Activated CD4-positive, alpha-beta memory T cell treated with anti-CD3 and anti-CD28 coated beads, Interleukin-2, amount 10 ng/mL, durations not matched to agents 7 days and 5 days (primary cell): ENCODE measurements at regions of chrX and their contacts with region 1.

Region 1: GRCh38 chrX:136028251-136028984 is 43.2 kb downstream of the SLC9A6 start:
- DNase-seq: no peak
- H3K4me3 Mint-ChIP-seq: no peak overlapping the region
- H3K27ac Mint-ChIP-seq: no peak overlapping the region
- H3K4me1 Mint-ChIP-seq: no peaks in the 10 kb centered on the region
- H3K27me3 Mint-ChIP-seq: no peaks in the 10 kb centered on the region

Region 2: DNA sequence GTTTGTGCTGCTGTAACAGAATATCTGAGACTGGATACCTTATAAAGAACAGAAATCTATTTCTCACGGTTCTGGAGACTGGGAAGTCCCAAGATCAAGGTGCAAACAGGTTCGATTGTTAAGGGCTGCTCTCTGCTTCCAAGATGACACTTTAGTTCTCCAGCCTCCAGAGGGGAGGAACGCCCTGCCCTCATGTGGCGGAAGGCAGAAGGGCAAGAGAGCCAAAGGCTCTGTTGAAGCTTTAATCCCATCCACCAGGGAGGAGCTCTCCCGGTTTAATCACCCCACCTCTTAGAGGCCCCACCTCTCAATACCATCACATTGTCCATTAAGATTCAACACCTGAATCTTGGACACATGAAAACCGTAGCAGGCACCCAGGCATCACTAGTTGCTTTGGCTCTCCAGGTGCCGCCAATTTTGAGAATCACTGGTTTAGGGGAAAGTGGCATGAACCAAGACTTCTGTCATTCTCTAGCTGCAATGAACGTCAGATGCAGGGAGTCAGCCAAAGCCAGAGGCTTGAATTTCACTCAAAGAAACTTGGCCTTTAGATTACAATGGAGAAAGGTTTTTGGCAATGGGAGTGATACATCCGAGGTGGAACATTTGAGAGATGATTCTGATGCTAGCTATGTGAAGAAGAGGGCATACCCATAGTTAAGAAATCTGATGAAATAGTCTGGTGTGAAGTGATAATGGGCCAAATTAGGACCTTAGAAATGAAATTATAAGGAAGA is 134.6 kb after region 1 on chrX:
- CTCF ChIA-PET with region 1: interaction called, 60 read pairs
- POLR2A ChIA-PET with region 1: interaction called, 3 read pairs
- DNase-seq: peak; percentile 49
- H3K4me3 Mint-ChIP-seq: no peak overlapping the region
- H3K27ac Mint-ChIP-seq: no peak overlapping the region
- H3K4me1 Mint-ChIP-seq: peaks cover 8% of the 10 kb centered on the region
- H3K27me3 Mint-ChIP-seq: no peaks in the 10 kb centered on the region

Region 3: GRCh38 chrX:136209016-136209738 is 180.8 kb after region 1 on chrX:
- CTCF ChIA-PET with region 1: interaction called, 30 read pairs
- POLR2A ChIA-PET with region 1: no interaction called
- DNase-seq: peak; percentile 38
- H3K4me3 Mint-ChIP-seq: no peak overlapping the region
- H3K27ac Mint-ChIP-seq: no peak overlapping the region
- H3K4me1 Mint-ChIP-seq: peaks cover 19% of the 10 kb centered on the region
- H3K27me3 Mint-ChIP-seq: no peaks in the 10 kb centered on the region

Region 4: GRCh38 chrX:136268051-136269048 is 239.9 kb after region 1 on chrX:
- CTCF ChIA-PET with region 1: interaction called, 26 read pairs
- POLR2A ChIA-PET with region 1: interaction called, 3 read pairs
- DNase-seq: peak; percentile 51
- H3K4me3 Mint-ChIP-seq: no peak overlapping the region
- H3K27ac Mint-ChIP-seq: no peak overlapping the region
- H3K4me1 Mint-ChIP-seq: peaks cover 7% of the 10 kb centered on the region
- H3K27me3 Mint-ChIP-seq: no peaks in the 10 kb centered on the region